ENCODE measurements at regions of chr14 and their contacts with region 1.

Region 1: DNA sequence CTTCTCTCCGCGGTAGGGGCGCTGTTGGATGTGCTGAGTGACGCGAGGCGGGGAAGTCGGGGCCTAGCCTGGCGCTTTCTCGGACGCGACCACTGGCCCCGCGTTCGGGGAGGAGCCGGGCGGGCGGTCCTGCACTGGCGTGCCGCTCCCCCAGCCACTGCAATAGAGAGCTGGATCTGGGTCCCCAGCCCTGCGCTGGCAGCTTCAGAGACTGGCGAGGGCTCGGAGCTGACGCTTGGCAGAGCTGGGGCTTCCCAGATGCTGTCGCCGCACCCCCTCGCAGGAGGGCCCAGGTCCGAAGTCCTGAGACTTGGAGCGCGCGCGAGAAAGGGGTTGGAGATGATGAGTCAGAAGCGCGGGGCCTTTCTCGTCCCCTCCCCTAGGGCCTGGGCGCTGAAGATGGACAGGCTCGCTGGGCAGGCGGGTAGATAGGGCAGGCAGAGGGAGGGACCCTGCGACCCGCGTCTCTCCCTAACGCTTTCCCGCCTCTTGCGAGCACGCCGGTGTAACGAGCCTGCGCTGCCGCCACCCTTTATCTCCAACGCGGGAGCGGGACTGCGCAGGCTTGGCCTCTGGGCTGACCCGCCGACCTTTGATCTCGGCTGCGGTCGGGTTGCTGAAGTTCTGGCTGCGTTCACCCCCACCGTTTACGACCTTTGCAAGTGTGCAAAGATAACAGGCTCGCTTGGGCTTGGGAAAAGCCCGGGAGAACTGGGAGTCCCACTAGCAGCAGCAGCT is 3.0 kb downstream of the TMEM253 start:
- DNase-seq: peak; percentile 89 to 96 (median 92)
- ATAC-seq: peak; percentile 82
- H3K4me3 ChIP-seq: peak overlapping the region; percentile 78
- H3K4me3 Mint-ChIP-seq: peak overlapping the region; percentile 86
- H3K27ac ChIP-seq: peak overlapping the region; percentile 97
- H3K27ac Mint-ChIP-seq: peak overlapping the region; percentile 85
- H3K4me1 ChIP-seq: peaks cover 24% of the 10 kb centered on the region
- H3K4me1 Mint-ChIP-seq: peaks cover 38% of the 10 kb centered on the region
- H3K27me3 ChIP-seq: no peaks in the 10 kb centered on the region
- H3K27me3 Mint-ChIP-seq: no peaks in the 10 kb centered on the region
- CTCF ChIP-seq: no peak

Region 2: GRCh38 chr14:20855652-20856291 is 248.1 kb before region 1 on chr14:
- CTCF ChIA-PET with region 1: no interaction called
- POLR2A ChIA-PET with region 1: no interaction called
- intact Hi-C with region 1: loop called in 1 of 2 experiments (anchors 10 kb)
- DNase-seq: peak in 11 of 14 experiments; percentile 8 to 79 (median 25)
- ATAC-seq: peak; percentile 92
- H3K4me3 ChIP-seq: no peak overlapping the region
- H3K4me3 Mint-ChIP-seq: no peak overlapping the region
- H3K27ac ChIP-seq: no peak overlapping the region
- H3K27ac Mint-ChIP-seq: no peak overlapping the region
- H3K4me1 ChIP-seq: no peaks in the 10 kb centered on the region
- H3K4me1 Mint-ChIP-seq: no peaks in the 10 kb centered on the region
- H3K27me3 ChIP-seq: peaks cover 0 to 6% of the 10 kb centered on the region in 2 experiments
- H3K27me3 Mint-ChIP-seq: peaks cover 25% of the 10 kb centered on the region
- CTCF ChIP-seq: peak; percentile 67

Region 3: GRCh38 chr14:20989572-20990551 is 114.0 kb before region 1 on chr14 and contains the start of gene METTL17:
- CTCF ChIA-PET with region 1: interaction called, 3 read pairs
- POLR2A ChIA-PET with region 1: no interaction called
- intact Hi-C with region 1: loop called in 1 of 2 experiments (anchors 2 kb)
- DNase-seq: peak; percentile 72 to 95 (median 80)
- ATAC-seq: peak; percentile 92
- H3K4me3 ChIP-seq: peak within 1 kb of the TSS; percentile 95
- H3K4me3 Mint-ChIP-seq: peak within 1 kb of the TSS; percentile 90
- H3K27ac ChIP-seq: peak within 1 kb of the TSS; percentile 59 to 73
- H3K27ac Mint-ChIP-seq: peak within 1 kb of the TSS; percentile 92
- H3K4me1 ChIP-seq: peaks cover 24% of the 10 kb centered on the region
- H3K4me1 Mint-ChIP-seq: peaks cover 36% of the 10 kb centered on the region
- H3K27me3 ChIP-seq: no peaks in the 10 kb centered on the region
- H3K27me3 Mint-ChIP-seq: no peaks in the 10 kb centered on the region
- CTCF ChIP-seq: no peak
- total RNA-seq, gene METTL17: 92.0 to 94.8 TPM

Region 4: GRCh38 chr14:21039585-21040369 is 64.1 kb before region 1 on chr14:
- CTCF ChIA-PET with region 1: interaction called, 10 read pairs
- POLR2A ChIA-PET with region 1: interaction called, 7 read pairs
- intact Hi-C with region 1: no loop called
- DNase-seq: peak in 6 of 14 experiments; percentile 10 to 73 (median 54)
- ATAC-seq: peak; percentile 73
- H3K4me3 ChIP-seq: no peak overlapping the region
- H3K4me3 Mint-ChIP-seq: no peak overlapping the region
- H3K27ac ChIP-seq: no peak overlapping the region
- H3K27ac Mint-ChIP-seq: no peak overlapping the region
- H3K4me1 ChIP-seq: peaks cover 13% of the 10 kb centered on the region
- H3K4me1 Mint-ChIP-seq: peaks cover 8% of the 10 kb centered on the region
- H3K27me3 ChIP-seq: peaks cover 0 to 3% of the 10 kb centered on the region in 2 experiments
- H3K27me3 Mint-ChIP-seq: peaks cover 10% of the 10 kb centered on the region
- CTCF ChIP-seq: peak; percentile 68

Region 5: DNA sequence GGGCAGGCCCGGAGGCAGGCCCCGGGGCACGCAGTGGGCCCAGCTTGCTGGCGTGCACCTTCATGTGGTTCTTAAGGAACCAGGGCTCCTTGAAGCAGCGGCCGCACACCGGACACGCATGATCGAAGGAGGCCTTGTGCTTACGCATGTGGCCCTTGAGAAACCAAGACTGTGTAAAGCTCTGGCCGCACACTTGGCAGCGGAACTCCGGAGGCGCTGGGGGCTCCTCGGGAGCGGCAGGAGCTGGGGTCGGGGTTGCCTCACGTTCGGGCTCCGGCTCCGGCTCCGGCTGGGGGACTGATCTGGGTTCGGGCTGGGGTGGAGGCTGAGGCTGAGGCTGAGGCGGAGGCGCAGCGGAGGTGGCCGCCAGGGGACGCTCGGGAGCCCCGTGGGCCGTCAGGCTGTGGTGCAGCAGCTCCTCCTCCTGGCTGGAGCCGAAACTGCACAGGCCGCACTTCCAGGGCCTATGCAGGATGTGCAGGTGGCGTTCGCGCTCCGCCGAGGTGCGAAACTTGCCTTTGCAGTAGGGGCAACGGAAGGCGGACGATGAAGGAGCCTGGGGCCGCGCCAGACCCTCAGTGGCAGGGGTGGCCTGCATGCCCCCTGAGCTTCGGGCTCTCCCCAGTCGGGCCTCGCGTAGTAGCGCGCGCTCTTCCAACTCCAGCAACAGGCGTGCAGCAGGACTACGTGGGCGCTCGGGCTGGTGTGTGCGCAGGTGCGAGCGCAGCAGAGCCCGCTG is 11.4 kb before region 1 on chr14:
- CTCF ChIA-PET with region 1: interaction called, 116 read pairs
- POLR2A ChIA-PET with region 1: interaction called, 52 read pairs
- intact Hi-C with region 1: loop called (anchors 1 kb)
- DNase-seq: peak; percentile 84 to 97 (median 93)
- ATAC-seq: peak; percentile 80
- H3K4me3 ChIP-seq: no peak overlapping the region
- H3K4me3 Mint-ChIP-seq: peak overlapping the region; percentile 38
- H3K27ac ChIP-seq: no peak overlapping the region
- H3K27ac Mint-ChIP-seq: peak overlapping the region; percentile 56
- H3K4me1 ChIP-seq: peaks cover 29% of the 10 kb centered on the region
- H3K4me1 Mint-ChIP-seq: peaks cover 39% of the 10 kb centered on the region
- H3K27me3 ChIP-seq: no peaks in the 10 kb centered on the region
- H3K27me3 Mint-ChIP-seq: no peaks in the 10 kb centered on the region
- CTCF ChIP-seq: peak; percentile 100

Region 6: GRCh38 chr14:21192447-21192822 is 88.6 kb after region 1 on chr14:
- CTCF ChIA-PET with region 1: no interaction called
- POLR2A ChIA-PET with region 1: no interaction called
- intact Hi-C with region 1: no loop called
- DNase-seq: no peak
- ATAC-seq: no peak
- H3K4me3 ChIP-seq: peak overlapping the region; percentile 56
- H3K4me3 Mint-ChIP-seq: peak overlapping the region; percentile 82
- H3K27ac ChIP-seq: no peak overlapping the region
- H3K27ac Mint-ChIP-seq: no peak overlapping the region
- H3K4me1 ChIP-seq: peaks cover 18% of the 10 kb centered on the region
- H3K4me1 Mint-ChIP-seq: peaks cover 7% of the 10 kb centered on the region
- H3K27me3 ChIP-seq: no peaks in the 10 kb centered on the region
- H3K27me3 Mint-ChIP-seq: no peaks in the 10 kb centered on the region
- CTCF ChIP-seq: no peak

Region 7: DNA sequence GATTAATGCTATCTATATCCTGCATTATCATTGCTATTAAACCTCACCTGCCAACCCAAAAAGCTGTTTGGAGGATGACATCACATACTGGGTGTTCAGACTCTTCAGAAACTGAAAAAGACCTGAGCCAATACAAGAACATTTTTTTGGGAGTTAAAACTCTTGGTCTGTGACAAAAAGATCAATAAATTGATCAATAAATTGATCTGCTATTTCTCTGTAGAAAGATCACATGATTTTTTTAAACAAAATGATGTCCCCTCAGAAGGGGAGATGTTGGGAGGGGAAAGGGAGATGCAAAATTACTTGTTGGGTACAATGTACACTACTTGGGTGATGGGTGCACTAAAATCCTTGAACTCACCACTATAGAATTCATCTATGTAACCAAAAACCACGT is 635.2 kb after region 1 on chr14:
- CTCF ChIA-PET with region 1: no interaction called
- POLR2A ChIA-PET with region 1: no interaction called
- intact Hi-C with region 1: no loop called
- DNase-seq: no peak
- ATAC-seq: no peak
- H3K4me3 ChIP-seq: peak overlapping the region; percentile 47
- H3K4me3 Mint-ChIP-seq: no peak overlapping the region
- H3K27ac ChIP-seq: no peak overlapping the region
- H3K27ac Mint-ChIP-seq: peak overlapping the region; percentile 38
- H3K4me1 ChIP-seq: no peaks in the 10 kb centered on the region
- H3K4me1 Mint-ChIP-seq: peaks cover 6% of the 10 kb centered on the region
- H3K27me3 ChIP-seq: peaks cover 13 to 16% of the 10 kb centered on the region in 2 experiments
- H3K27me3 Mint-ChIP-seq: peaks cover 79% of the 10 kb centered on the region
- CTCF ChIP-seq: no peak